Sigmoid colon (tissue), 7 donors: ENCODE measurements at regions of chr15 and their contacts with region 1.

Region 1: DNA sequence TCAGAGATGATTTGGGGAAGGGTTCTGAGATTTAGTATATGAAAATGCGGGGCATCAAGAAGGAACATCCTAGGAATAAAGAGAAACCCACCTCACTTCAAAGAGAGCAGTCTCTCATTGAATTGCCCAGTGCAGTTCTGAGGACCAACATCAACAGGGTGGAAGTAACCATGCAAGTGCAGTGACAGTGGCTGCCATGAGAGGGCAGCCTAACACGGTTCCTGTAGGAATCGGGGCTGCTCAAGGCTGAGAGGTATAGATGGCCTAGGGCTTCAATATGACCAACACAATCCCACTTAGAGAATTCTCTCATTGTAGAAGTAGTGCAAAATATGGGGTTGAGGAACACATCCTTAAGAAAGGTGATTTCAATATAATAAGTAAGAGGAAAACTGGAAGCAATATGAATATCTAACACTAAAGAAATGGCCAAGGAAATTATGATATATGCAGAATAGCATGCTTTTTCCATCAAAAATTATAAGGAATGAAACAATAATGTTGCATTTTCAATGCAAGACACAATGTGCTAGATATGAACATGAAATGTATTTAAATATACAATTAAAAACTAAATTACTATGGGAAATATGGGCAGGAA is 51.1 kb upstream of the ARRDC4 start:
- DNase-seq: peak; percentile 79
- H3K4me3 ChIP-seq: no peak overlapping the region
- H3K27ac ChIP-seq: no peak overlapping the region
- H3K4me1 ChIP-seq: peaks cover 0 to 5% (median 4%) of the 10 kb centered on the region in 4 donors
- H3K27me3 ChIP-seq: no peaks in the 10 kb centered on the region
- CTCF ChIP-seq: peak; percentile 80 to 91 (median 90)
- EP300 ChIP-seq: no peak
- POLR2A ChIP-seq: no peak

Region 2: DNA sequence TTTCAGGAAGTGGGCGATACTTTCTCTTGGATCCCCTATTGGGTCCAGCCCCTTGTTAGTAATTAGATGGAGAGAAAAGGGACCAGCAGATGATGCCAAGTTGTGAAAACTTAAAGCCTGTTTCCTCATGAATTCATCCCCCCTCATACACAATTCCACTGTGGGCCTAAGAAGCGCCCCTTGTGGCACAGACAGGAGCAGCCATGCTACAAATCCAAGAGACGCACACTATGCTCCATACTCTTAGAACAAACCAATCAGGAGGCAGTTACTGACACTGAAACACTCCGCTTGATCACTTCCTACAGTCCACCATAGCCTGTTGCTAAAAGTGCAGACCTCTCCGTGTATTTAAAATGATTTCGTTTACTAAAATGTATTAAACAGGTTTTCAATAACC is 60.2 kb before region 1 on chr15:
- intact Hi-C with region 1: no loop called
- DNase-seq: no peak
- H3K4me3 ChIP-seq: no peak overlapping the region
- H3K27ac ChIP-seq: no peak overlapping the region
- H3K4me1 ChIP-seq: peaks cover 0 to 4% (median 0%) of the 10 kb centered on the region in 4 donors
- H3K27me3 ChIP-seq: no peaks in the 10 kb centered on the region
- CTCF ChIP-seq: no peak
- EP300 ChIP-seq: no peak
- POLR2A ChIP-seq: no peak

Region 3: DNA sequence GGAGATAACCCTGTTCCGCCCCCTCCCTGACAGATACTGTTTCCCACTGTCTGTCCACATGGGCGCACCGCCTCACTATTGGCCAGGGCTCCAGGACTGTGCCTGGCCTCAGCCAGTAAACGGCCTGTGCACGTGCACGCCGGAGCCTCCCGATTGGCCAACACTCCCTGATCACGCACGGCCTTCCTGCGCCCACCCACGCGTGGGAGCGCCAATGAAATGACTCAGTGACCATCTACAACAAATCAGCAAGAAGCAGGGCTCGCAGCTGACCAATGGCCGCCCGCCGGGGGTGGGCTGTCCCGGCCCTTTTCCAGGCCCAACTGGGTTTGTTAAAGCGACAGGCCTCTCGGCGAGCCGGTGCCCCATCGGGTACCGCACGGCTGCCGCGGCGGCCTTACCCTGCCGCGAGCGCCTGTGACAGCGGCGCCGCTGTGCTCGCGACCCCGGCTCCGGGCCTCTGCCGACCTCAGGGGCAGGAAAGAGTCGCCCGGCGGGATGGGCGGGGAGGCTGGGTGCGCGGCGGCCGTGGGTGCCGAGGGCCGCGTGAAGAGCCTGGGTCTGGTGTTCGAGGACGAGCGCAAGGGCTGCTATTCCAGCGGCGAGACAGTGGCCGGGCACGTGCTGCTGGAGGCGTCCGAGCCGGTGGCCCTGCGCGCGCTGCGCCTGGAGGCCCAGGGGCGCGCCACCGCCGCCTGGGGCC is 51.1 kb after region 1 on chr15 and contains the start of gene ARRDC4:
- intact Hi-C with region 1: loop called (anchors 5 kb)
- DNase-seq: peak; percentile 100
- H3K4me3 ChIP-seq: peak within 1 kb of the TSS; percentile 71 to 91 (median 84)
- H3K27ac ChIP-seq: peak within 1 kb of the TSS; percentile 94 to 98 (median 98)
- H3K4me1 ChIP-seq: peaks cover 0 to 40% (median 36%) of the 10 kb centered on the region in 4 donors
- H3K27me3 ChIP-seq: no peaks in the 10 kb centered on the region
- CTCF ChIP-seq: no peak
- EP300 ChIP-seq: peak in 1 of 4 donors; percentile 33
- POLR2A ChIP-seq: peak; percentile 72 to 82
- total RNA-seq, gene ARRDC4: 116 to 205 (median 170) TPM

Region 4: GRCh38 chr15:97972366-97972765 is 63.0 kb after region 1 on chr15:
- intact Hi-C with region 1: no loop called
- DNase-seq: no peak
- H3K4me3 ChIP-seq: no peak overlapping the region
- H3K27ac ChIP-seq: peak overlapping the region; percentile 25 to 97 (median 78)
- H3K4me1 ChIP-seq: peaks cover 0 to 86% (median 58%) of the 10 kb centered on the region in 4 donors
- H3K27me3 ChIP-seq: no peaks in the 10 kb centered on the region
- CTCF ChIP-seq: no peak
- EP300 ChIP-seq: no peak
- POLR2A ChIP-seq: no peak

Region 5: GRCh38 chr15:98009971-98010370 is 100.6 kb after region 1 on chr15:
- intact Hi-C with region 1: no loop called
- DNase-seq: no peak
- H3K4me3 ChIP-seq: no peak overlapping the region
- H3K27ac ChIP-seq: peak overlapping the region in 3 of 4 donors; percentile 86 to 93 (median 91)
- H3K4me1 ChIP-seq: peaks cover 0 to 55% (median 45%) of the 10 kb centered on the region in 4 donors
- H3K27me3 ChIP-seq: no peaks in the 10 kb centered on the region
- CTCF ChIP-seq: no peak
- EP300 ChIP-seq: no peak
- POLR2A ChIP-seq: no peak

Region 6: GRCh38 chr15:98043160-98044014 is 134.0 kb after region 1 on chr15:
- intact Hi-C with region 1: loop called (anchors 5 kb)
- DNase-seq: no peak
- H3K4me3 ChIP-seq: no peak overlapping the region
- H3K27ac ChIP-seq: no peak overlapping the region
- H3K4me1 ChIP-seq: no peaks in the 10 kb centered on the region
- H3K27me3 ChIP-seq: no peaks in the 10 kb centered on the region
- CTCF ChIP-seq: peak in 1 of 4 experiments; percentile 20
- EP300 ChIP-seq: no peak
- POLR2A ChIP-seq: no peak

Region 7: GRCh38 chr15:98085003-98085639 is 175.7 kb after region 1 on chr15:
- intact Hi-C with region 1: loop called (anchors 1 kb)
- DNase-seq: no peak
- H3K4me3 ChIP-seq: no peak overlapping the region
- H3K27ac ChIP-seq: peak overlapping the region in 1 of 4 donors; percentile 12
- H3K4me1 ChIP-seq: peaks cover 0 to 14% (median 3%) of the 10 kb centered on the region in 4 donors
- H3K27me3 ChIP-seq: no peaks in the 10 kb centered on the region
- CTCF ChIP-seq: peak; percentile 51 to 69 (median 62)
- EP300 ChIP-seq: no peak
- POLR2A ChIP-seq: no peak

Region 8: DNA sequence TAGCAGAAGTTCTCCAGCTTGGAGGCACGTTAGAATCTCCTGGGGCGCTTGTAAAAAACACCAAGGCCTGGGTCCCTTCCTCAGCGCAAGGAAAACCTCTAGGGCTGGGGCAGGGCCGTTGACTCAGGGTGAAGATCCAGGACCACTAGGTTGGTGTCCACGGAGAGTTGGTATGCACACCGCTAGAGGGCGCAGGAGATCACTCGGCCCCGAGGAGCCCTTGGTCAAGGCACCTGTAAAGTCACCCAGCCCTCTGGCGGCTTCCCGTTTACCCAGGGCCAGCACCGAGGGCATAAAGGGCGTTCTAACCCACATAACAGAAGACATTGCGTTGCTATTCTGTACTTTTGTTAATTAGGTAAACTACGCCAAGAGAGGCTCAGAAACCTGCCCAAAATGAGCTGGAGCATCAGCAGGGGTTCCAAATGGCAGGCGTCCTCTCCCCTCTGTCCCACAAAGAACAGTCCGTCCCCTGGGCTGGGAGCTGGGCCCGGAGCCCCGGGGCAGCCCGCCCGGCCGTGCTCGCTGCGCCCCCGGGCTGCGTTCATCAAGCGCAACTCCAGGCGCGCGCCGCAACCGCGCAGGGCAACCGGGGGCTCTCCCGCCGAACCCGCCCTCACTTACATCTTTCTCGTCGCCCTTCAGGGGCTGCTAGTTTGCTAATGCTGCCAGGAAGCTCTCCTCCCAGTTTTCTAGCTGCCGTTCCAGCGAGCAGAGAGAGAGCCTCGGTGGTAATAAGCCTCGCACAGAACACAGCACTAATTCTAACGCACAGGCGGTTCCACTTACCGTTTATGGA is 383.2 kb after region 1 on chr15:
- intact Hi-C with region 1: loop called (anchors 10 kb)
- DNase-seq: peak; percentile 70
- H3K4me3 ChIP-seq: peak overlapping the region in 3 of 4 donors; percentile 6 to 28 (median 25)
- H3K27ac ChIP-seq: no peak overlapping the region
- H3K4me1 ChIP-seq: peaks cover 0 to 10% (median 9%) of the 10 kb centered on the region in 4 donors
- H3K27me3 ChIP-seq: peaks cover 0 to 35% (median 6%) of the 10 kb centered on the region in 3 donors
- CTCF ChIP-seq: peak in 3 of 4 experiments; percentile 40 to 65 (median 44)
- EP300 ChIP-seq: no peak
- POLR2A ChIP-seq: no peak

Region 9: DNA sequence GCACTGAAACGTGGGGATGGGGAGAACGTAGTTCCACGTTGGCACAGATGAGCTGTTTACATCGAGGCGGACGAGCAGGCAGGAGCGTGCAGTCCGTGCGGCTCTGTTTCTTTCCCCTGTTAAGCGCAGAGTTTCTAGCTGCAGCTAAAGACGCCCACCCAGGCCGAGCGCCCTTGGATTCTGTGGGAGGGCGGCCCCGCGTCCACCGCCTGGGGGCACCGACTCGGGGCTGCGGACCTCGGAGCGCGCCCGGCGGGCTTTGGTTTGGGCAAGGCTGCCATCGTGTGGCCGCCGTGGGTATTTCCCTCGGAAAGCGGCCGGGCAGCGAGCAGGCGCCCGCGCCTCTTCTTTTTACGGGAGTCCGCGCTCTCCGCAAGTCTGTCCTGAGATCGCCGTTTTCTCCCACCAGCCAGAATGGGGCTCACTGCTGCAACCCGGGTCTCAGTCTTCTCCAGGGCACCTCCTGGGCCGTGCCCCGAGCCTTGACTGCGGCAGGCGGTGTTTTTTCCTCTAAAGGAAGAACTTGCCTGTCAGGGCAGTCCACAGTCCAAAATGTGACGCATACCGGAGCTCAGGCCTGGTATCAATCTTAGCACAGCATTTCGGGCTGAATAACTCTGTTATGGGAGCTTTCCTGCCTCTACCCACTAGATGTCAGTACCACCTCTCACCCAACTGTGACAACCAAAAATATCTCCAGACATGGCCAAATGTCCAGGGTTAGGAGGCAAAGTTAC is 519.0 kb after region 1 on chr15:
- intact Hi-C with region 1: loop called (anchors 10 kb)
- DNase-seq: peak; percentile 85
- H3K4me3 ChIP-seq: peak overlapping the region; percentile 34 to 48 (median 46)
- H3K27ac ChIP-seq: peak overlapping the region; percentile 74 to 78 (median 76)
- H3K4me1 ChIP-seq: peaks cover 0 to 19% (median 17%) of the 10 kb centered on the region in 4 donors
- H3K27me3 ChIP-seq: no peaks in the 10 kb centered on the region
- CTCF ChIP-seq: peak; percentile 47 to 93 (median 72)
- EP300 ChIP-seq: no peak
- POLR2A ChIP-seq: no peak